Activated CD8-positive, alpha-beta T cell treated with anti-CD3 and anti-CD28 coated beads for 36 hours (primary cell): ENCODE measurements at regions of chr9 and their contacts with region 1.

Region 1: DNA sequence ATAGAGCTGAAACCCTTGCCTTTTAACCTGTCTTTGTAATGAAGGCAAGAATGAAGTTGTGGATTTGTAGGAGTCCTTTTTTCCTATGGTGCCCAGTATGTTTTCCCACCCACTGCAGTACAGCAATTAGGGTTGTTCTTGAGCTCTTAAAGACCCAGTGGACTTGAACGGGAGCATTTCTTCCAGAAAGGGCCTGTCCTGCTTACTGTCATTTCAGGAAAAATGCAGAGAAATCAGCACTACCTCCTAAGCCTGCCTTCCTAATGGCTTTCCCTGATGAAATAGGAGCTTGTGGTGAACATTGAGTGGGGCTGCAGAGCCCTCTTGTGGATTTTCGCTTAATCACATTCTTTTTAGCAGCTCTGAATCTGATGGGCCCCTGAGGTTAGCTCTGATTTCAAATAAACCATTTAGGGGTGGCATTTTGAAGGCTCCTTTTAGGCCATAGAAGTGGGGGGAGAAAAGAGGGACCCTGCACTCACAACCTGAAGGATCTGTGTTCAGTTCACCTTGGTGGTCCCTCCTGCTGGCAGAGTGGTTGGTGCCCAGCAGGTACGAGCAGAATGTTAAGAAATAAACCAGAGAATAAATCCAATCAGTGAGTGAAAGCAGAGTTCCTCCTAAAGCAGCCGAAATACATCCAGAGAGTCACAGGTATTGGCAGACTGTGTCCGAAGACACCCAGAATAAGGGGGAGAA is 188.0 kb upstream of the KLF9 start:
- DNase-seq: peak; percentile 61
- ATAC-seq: peak; percentile 81
- H3K4me3 Mint-ChIP-seq: no peak overlapping the region
- H3K27ac Mint-ChIP-seq: no peak overlapping the region
- H3K4me1 Mint-ChIP-seq: no peaks in the 10 kb centered on the region
- H3K27me3 Mint-ChIP-seq: no peaks in the 10 kb centered on the region
- CTCF ChIP-seq: peak; percentile 91

Region 2: DNA sequence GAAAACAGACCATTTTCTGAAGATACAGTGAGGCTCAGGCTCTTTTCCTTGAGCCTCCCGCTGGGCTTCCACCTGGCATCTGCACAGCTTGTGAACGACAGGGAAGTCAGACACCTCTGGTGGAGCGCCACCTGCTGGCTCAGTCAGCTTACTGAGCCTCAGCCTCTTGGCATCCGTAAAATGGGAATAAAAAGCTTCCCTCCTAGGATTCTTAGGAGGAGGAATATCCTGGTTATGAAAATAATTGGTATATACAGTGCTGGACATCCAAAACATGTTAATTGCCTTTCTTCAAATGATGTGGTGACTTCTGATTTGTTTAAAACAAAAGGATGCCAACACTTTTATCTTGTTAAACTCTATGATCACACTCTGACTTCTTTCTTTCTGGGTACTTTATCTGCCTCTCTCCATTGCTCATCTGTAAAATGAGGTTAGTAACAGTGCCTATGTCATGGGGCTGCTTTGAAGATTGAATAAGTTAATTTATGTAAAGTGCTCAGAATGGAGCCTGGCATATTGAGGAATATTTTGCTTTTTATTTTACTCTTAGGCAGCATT is 491.3 kb before region 1 on chr9:
- CTCF ChIA-PET with region 1: interaction called, 5 read pairs
- POLR2A ChIA-PET with region 1: no interaction called
- intact Hi-C with region 1: loop called (anchors 5 kb)
- DNase-seq: peak; percentile 72
- ATAC-seq: no peak
- H3K4me3 Mint-ChIP-seq: no peak overlapping the region
- H3K27ac Mint-ChIP-seq: no peak overlapping the region
- H3K4me1 Mint-ChIP-seq: peaks cover 8% of the 10 kb centered on the region
- H3K27me3 Mint-ChIP-seq: peaks cover 12% of the 10 kb centered on the region
- CTCF ChIP-seq: peak; percentile 96

Region 3: GRCh38 chr9:70362952-70363351 is 239.5 kb before region 1 on chr9:
- CTCF ChIA-PET with region 1: interaction called, 12 read pairs
- POLR2A ChIA-PET with region 1: no interaction called
- intact Hi-C with region 1: no loop called
- DNase-seq: no peak
- ATAC-seq: no peak
- H3K4me3 Mint-ChIP-seq: no peak overlapping the region
- H3K27ac Mint-ChIP-seq: no peak overlapping the region
- H3K4me1 Mint-ChIP-seq: no peaks in the 10 kb centered on the region
- H3K27me3 Mint-ChIP-seq: no peaks in the 10 kb centered on the region
- CTCF ChIP-seq: no peak

Region 4: DNA sequence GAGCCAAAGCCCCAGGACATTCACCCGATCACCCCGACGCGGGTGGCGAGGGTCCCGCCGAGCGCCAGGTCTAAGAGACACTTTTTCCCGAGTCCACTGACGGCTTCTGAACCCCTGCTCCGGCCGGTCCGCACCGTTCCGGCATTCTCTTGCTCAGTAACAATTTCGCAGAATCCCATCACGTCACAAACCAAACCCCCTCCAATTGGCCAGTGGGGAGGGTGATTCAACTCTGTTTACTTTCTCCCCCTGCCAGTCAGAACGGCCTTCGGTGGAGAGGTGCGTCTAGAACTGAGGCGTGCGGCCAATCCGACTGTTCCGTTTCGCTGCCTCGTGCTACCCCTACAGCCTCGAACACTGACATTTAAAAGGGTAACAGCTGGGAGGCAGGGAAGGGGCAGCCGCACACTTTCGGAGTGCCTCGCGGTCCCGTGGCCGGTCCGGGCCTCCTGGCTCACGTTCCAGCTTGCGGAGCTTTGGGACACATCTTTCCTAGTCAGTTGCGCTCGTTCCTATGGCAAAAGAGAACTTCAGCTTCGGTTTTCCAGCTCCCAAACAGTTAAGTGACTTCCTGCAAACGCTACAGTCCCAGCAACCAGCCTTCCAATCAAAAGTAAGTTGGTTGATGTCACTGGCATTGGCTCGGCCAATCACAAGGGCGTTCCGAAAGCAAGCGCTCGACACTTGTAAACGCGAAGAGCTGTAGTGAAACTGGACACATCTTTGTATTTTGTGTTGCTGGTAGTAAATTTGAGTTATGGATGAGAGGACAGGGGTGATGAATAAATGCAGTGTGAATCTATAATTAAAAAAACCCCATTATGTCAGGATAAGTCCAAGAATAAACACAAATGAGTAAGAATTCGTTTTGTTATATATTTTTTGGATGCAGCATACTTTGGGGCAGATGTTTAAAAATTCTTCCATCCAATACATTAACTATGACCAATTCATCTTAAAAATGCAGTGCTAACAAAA is 188.4 kb before region 1 on chr9 and contains the start of gene KLF9:
- CTCF ChIA-PET with region 1: interaction called, 12 read pairs
- POLR2A ChIA-PET with region 1: interaction called, 3 read pairs
- intact Hi-C with region 1: loop called (anchors 5 kb)
- DNase-seq: peak; percentile 97
- ATAC-seq: peak; percentile 76
- H3K4me3 Mint-ChIP-seq: peak within 1 kb of the TSS; percentile 98
- H3K27ac Mint-ChIP-seq: peak within 1 kb of the TSS; percentile 100
- H3K4me1 Mint-ChIP-seq: peaks cover 42% of the 10 kb centered on the region
- H3K27me3 Mint-ChIP-seq: no peaks in the 10 kb centered on the region
- CTCF ChIP-seq: no peak
- total RNA-seq, gene KLF9: 19.0 to 20.1 TPM

Region 5: GRCh38 chr9:70498866-70499265 is 103.6 kb before region 1 on chr9:
- CTCF ChIA-PET with region 1: interaction called, 11 read pairs
- POLR2A ChIA-PET with region 1: no interaction called
- intact Hi-C with region 1: no loop called
- DNase-seq: no peak
- ATAC-seq: no peak
- H3K4me3 Mint-ChIP-seq: no peak overlapping the region
- H3K27ac Mint-ChIP-seq: no peak overlapping the region
- H3K4me1 Mint-ChIP-seq: peaks cover 12% of the 10 kb centered on the region
- H3K27me3 Mint-ChIP-seq: peaks cover 6% of the 10 kb centered on the region
- CTCF ChIP-seq: no peak

Region 6: GRCh38 chr9:70586476-70586875 is 16.0 kb before region 1 on chr9:
- CTCF ChIA-PET with region 1: interaction called, 15 read pairs
- POLR2A ChIA-PET with region 1: interaction called, 3 read pairs
- intact Hi-C with region 1: no loop called
- DNase-seq: no peak
- ATAC-seq: no peak
- H3K4me3 Mint-ChIP-seq: no peak overlapping the region
- H3K27ac Mint-ChIP-seq: no peak overlapping the region
- H3K4me1 Mint-ChIP-seq: no peaks in the 10 kb centered on the region
- H3K27me3 Mint-ChIP-seq: no peaks in the 10 kb centered on the region
- CTCF ChIP-seq: no peak

Region 7: GRCh38 chr9:70753311-70753710 is 150.8 kb after region 1 on chr9:
- CTCF ChIA-PET with region 1: no interaction called
- POLR2A ChIA-PET with region 1: no interaction called
- intact Hi-C with region 1: no loop called
- DNase-seq: no peak
- ATAC-seq: no peak
- H3K4me3 Mint-ChIP-seq: no peak overlapping the region
- H3K27ac Mint-ChIP-seq: no peak overlapping the region
- H3K4me1 Mint-ChIP-seq: no peaks in the 10 kb centered on the region
- H3K27me3 Mint-ChIP-seq: peaks cover 4% of the 10 kb centered on the region
- CTCF ChIP-seq: no peak